Prostate gland (tissue), 2 donors: ENCODE measurements at regions of chr2 and their contacts with region 1.

Region 1: GRCh38 chr2:216517447-216518227 is 19.0 kb downstream of the RPL37A start:
- DNase-seq: no peak
- H3K4me3 ChIP-seq: no peak overlapping the region
- H3K27ac ChIP-seq: no peak overlapping the region
- H3K4me1 ChIP-seq: no peaks in the 10 kb centered on the region
- H3K27me3 ChIP-seq: no peaks in the 10 kb centered on the region
- CTCF ChIP-seq: no peak
- POLR2A ChIP-seq: no peak

Region 2: GRCh38 chr2:216666461-216667233 is 149.0 kb after region 1 on chr2:
- intact Hi-C with region 1: loop called (anchors 1 kb)
- DNase-seq: peak; percentile 67
- H3K4me3 ChIP-seq: no peak overlapping the region
- H3K27ac ChIP-seq: no peak overlapping the region
- H3K4me1 ChIP-seq: peaks cover 4% of the 10 kb centered on the region
- H3K27me3 ChIP-seq: no peaks in the 10 kb centered on the region
- CTCF ChIP-seq: peak; percentile 90 to 98 (median 97)
- POLR2A ChIP-seq: no peak